Activated naive CD4-positive, alpha-beta T cell treated with anti-CD3 and anti-CD28 coated beads for 36 hours (primary cell): ENCODE measurements at regions of chr11 and their contacts with region 1.

Region 1: DNA sequence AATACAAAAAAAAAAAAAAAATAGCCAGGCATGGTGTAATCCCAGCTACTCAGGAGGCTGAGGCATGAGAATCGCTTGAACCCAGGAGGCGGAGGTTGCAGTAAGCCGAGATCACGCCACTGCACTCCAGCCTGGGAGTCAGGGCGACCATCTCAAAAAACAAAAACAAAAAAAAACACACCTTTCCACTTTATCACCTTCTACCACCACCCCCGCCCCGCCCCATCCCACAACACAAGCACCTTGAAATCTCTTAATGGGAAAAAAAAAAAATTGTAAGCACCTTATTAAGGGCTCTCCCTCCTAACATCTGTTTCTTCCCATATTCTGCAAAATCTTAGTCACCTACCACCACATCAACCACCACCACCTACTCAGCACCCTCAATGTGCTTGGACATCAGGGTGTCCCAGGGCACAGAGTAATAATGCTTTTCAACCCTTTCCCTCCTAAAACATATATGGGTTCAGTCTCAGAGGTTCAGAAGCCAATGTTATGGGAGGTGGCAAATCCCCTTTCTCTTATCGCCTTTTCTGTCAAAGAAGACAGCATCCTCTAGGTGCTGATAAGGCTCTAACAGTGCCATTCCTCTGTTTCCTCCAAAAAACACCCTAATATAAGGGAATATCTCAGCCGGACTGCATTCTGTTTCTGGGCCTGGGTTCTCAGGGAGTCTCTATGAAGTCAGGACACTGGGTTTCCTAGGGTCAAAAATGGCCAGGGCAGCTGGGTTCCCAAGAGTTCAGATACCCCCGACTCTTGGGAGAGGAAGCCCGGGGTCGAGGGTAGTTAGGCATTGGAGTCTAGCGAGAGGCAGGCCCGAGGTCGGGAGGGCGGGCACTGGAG is 718 bp downstream of the INTS5 start:
- DNase-seq: peak; percentile 37
- H3K4me3 Mint-ChIP-seq: peak overlapping the region; percentile 90
- H3K27ac Mint-ChIP-seq: peak overlapping the region; percentile 87
- H3K4me1 Mint-ChIP-seq: peaks cover 25% of the 10 kb centered on the region
- H3K27me3 Mint-ChIP-seq: no peaks in the 10 kb centered on the region

Region 2: GRCh38 chr11:62621567-62622470 is 30.6 kb before region 1 on chr11 and contains the start of gene B3GAT3:
- CTCF ChIA-PET with region 1: interaction called, 3 read pairs
- intact Hi-C with region 1: loop called (anchors 1 kb)
- DNase-seq: peak; percentile 97
- H3K4me3 Mint-ChIP-seq: peak within 1 kb of the TSS; percentile 89
- H3K27ac Mint-ChIP-seq: peak within 1 kb of the TSS; percentile 93
- H3K4me1 Mint-ChIP-seq: peaks cover 23% of the 10 kb centered on the region
- H3K27me3 Mint-ChIP-seq: no peaks in the 10 kb centered on the region
- total RNA-seq, gene B3GAT3: 43.1 to 45.7 TPM

Region 3: DNA sequence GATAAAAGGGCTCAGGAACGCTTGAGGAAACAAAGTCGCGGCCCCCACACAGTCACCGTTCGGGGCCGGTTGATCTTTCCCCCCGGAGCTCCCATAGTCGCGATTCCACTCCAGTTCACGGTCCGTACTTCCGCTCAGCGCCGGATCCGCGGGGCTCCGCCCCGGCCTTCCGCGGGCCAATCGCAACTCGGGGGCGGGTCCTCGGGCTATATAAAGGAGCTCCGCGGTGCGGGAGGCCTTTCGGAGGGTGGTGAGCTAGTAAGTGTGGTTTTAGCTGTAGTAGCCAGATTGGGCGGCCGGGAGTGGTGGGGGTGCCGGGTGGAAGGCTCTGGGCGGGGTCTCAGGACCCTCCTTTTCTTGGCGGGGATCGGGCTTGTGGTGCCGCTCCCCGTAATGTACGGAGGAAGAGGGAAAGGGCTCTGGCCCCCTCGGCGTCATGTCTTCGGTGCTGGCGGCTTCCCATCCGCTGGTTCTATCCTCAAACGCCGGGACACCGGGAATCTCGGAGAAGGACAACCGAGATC is 12.8 kb after region 1 on chr11 and contains the starts of genes C11orf98 and CSKMT:
- CTCF ChIA-PET with region 1: interaction called, 7 read pairs
- intact Hi-C with region 1: loop called (anchors 1 kb)
- DNase-seq: peak; percentile 96
- H3K4me3 Mint-ChIP-seq: peak within 1 kb of the TSS; percentile 98
- H3K27ac Mint-ChIP-seq: peak within 1 kb of the TSS; percentile 88
- H3K4me1 Mint-ChIP-seq: peaks cover 42% of the 10 kb centered on the region
- H3K27me3 Mint-ChIP-seq: no peaks in the 10 kb centered on the region
- total RNA-seq, gene C11orf98: 73.5 to 76.5 TPM
- total RNA-seq, gene CSKMT: 35.2 to 44.0 TPM

Region 4: GRCh38 chr11:62671575-62672389 is 19.4 kb after region 1 on chr11 and contains the starts of genes LBHD1 and UQCC3:
- CTCF ChIA-PET with region 1: interaction called, 5 read pairs
- intact Hi-C with region 1: loop called (anchors 2 kb)
- DNase-seq: peak; percentile 78
- H3K4me3 Mint-ChIP-seq: peak within 1 kb of the TSS; percentile 99
- H3K27ac Mint-ChIP-seq: peak within 1 kb of the TSS; percentile 98
- H3K4me1 Mint-ChIP-seq: peaks cover 59% of the 10 kb centered on the region
- H3K27me3 Mint-ChIP-seq: no peaks in the 10 kb centered on the region
- total RNA-seq, gene LBHD1: 4.4 to 6.1 TPM
- total RNA-seq, gene UQCC3: 6.0 to 6.4 TPM

Region 5: GRCh38 chr11:62678770-62679696 is 26.6 kb after region 1 on chr11 and contains the start of gene UBXN1:
- CTCF ChIA-PET with region 1: interaction called, 3 read pairs
- intact Hi-C with region 1: loop called (anchors 2 kb)
- DNase-seq: peak; percentile 91
- H3K4me3 Mint-ChIP-seq: peak within 1 kb of the TSS; percentile 87
- H3K27ac Mint-ChIP-seq: peak within 1 kb of the TSS; percentile 94
- H3K4me1 Mint-ChIP-seq: peaks cover 32% of the 10 kb centered on the region
- H3K27me3 Mint-ChIP-seq: no peaks in the 10 kb centered on the region
- total RNA-seq, gene UBXN1: 121 to 124 TPM